IMR-90 (cell line): ENCODE measurements at regions of chr6 and their contacts with region 1.

Region 1: DNA sequence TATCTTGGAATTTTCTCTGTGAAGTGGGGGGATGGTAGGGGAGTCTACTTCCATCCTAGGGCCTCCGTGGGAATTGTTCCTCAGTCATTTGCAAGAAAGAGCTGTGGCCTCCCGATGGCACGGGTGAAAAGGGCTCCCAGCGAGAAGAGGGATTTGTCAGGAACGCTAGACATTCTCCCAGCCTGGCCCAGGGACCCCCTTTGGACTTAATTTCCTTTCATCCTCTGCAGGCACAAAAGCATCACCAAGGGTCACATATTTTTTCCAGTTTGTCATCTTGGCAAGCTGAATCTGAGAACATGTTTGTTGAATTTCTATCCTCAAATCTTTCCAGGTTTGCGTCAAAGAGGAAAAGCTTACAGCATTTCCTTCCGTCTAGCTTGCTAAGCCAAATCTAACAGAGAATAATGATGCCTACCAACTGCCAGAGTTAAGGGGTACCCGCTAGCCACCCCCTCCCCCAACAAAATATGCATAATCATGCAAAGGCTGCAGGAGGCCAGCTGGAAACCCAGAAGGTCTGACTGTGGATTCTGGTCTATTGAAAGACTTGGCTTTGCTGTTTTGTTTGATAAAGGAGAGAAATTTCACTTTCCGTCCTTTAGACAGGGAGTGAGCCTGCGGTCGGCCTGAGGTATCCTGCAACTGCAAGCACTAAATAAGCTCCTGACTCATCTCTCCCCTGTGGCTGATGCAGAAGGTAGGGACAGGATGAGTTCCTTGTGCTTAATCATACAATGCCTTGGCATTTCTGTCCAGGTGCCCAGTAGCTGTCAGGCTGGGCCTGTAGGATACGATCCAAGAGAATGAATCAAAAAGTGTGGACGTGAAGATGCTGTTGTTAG is 23.1 kb downstream of the PSMG4 start:
- DNase-seq: peak; percentile 85
- ATAC-seq: peak; percentile 53
- H3K4me3 ChIP-seq: no peak overlapping the region
- H3K27ac ChIP-seq: peak overlapping the region; percentile 7; the same call in 1 of the 2 replicates
- H3K4me1 ChIP-seq: peaks cover 18% of the 10 kb centered on the region
- H3K27me3 ChIP-seq: no peaks in the 10 kb centered on the region
- CTCF ChIP-seq: no peak
- POLR2A ChIP-seq: no peak
- RAD21 ChIP-seq: no peak

Region 2: DNA sequence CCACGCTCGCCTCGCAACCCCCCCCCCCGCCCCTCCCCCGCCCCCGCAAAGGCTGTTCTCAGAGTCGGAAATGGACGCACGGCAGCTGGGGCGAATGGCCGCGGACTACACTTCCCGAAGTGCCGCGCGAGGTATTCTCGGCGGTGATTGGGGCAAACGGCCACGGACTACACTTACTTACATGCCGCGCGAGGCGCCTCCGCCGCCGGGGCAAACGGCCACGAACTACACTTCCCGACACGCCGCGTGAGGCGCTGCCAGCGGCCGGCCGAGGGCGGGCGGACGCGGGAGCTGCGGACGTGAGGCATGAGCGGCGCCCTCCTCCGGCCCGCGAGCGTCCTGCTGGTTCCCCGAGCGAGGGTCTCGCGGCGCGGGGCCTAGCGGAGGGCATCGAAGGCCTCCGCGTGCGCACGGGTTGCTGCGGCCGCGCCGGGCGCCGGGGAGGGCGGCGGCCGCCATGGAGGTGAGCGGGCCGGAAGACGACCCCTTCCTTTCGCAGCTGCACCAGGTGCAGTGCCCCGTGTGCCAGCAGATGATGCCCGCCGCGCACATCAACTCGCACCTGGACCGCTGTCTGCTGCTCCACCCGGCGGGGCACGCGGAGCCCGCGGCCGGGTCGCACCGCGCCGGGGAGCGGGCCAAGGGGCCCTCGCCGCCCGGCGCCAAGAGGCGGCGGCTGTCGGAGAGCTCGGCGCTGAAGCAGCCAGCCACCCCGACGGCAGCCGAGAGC is 516.5 kb before region 1 on chr6 and contains the start of gene WRNIP1:
- CTCF ChIA-PET with region 1: no interaction called
- POLR2A ChIA-PET with region 1: no interaction called
- dilution Hi-C with region 1: no loop called
- in situ Hi-C with region 1: no loop called
- intact Hi-C with region 1: no loop called
- DNase-seq: peak; percentile 99
- ATAC-seq: peak; percentile 91
- H3K4me3 ChIP-seq: peak within 1 kb of the TSS; percentile 79
- H3K27ac ChIP-seq: peak within 1 kb of the TSS; percentile 86
- H3K4me1 ChIP-seq: peaks cover 18% of the 10 kb centered on the region
- H3K27me3 ChIP-seq: no peaks in the 10 kb centered on the region
- CTCF ChIP-seq: peak; percentile 86
- POLR2A ChIP-seq: peak; percentile 46
- RAD21 ChIP-seq: peak; percentile 24; the same call in 1 of the 2 replicates
- total RNA-seq, gene WRNIP1: 37.2 and 47.1 TPM in 2 replicates

Region 3: GRCh38 chr6:3410385-3411360 is 128.8 kb after region 1 on chr6:
- CTCF ChIA-PET with region 1: no interaction called
- POLR2A ChIA-PET with region 1: no interaction called
- dilution Hi-C with region 1: no loop called
- in situ Hi-C with region 1: no loop called
- intact Hi-C with region 1: loop called (anchors 5 kb)
- DNase-seq: peak; percentile 57
- ATAC-seq: peak; percentile 62
- H3K4me3 ChIP-seq: no peak overlapping the region
- H3K27ac ChIP-seq: no peak overlapping the region
- H3K4me1 ChIP-seq: no peaks in the 10 kb centered on the region
- H3K27me3 ChIP-seq: peaks cover 15% of the 10 kb centered on the region
- CTCF ChIP-seq: peak; percentile 66
- POLR2A ChIP-seq: no peak
- RAD21 ChIP-seq: peak; percentile 72

Region 4: GRCh38 chr6:3522561-3523250 is 240.9 kb after region 1 on chr6:
- CTCF ChIA-PET with region 1: interaction called, 4 read pairs
- POLR2A ChIA-PET with region 1: no interaction called
- dilution Hi-C with region 1: no loop called
- in situ Hi-C with region 1: no loop called
- intact Hi-C with region 1: loop called (anchors 5 kb)
- DNase-seq: peak; percentile 91
- ATAC-seq: peak; percentile 70
- H3K4me3 ChIP-seq: no peak overlapping the region
- H3K27ac ChIP-seq: peak overlapping the region; percentile 93
- H3K4me1 ChIP-seq: peaks cover 27% of the 10 kb centered on the region
- H3K27me3 ChIP-seq: 0 out of 2 replicates have a peak, but pooled peaks cover 2% of the 10 kb centered on the region
- CTCF ChIP-seq: no peak
- POLR2A ChIP-seq: no peak
- RAD21 ChIP-seq: no peak

Region 5: DNA sequence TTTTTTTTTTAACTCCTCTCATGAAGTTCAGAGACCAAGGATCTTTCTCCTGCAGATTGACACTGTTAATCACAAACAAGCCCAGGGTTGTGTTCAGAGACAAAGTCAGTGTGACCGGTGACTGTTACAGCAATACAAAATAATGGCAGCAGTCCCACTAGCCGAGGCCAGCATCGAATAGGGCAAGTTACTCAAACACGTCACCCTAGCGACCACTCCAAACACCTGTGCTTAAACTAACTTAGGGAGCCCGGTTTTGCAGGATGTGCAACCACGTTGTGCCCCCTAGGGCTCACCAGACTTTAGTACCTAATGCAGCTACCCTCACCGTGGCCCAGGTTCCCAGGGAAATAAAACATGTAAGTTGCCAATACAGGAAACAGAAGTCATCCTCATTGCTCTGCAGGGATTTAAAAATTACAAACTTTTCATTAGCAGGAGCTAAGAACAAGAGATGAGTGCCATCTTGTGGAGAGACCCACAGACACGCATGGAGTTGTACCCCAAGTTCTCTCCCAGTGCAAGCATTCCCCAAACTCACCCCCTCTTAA is 605.4 kb after region 1 on chr6:
- CTCF ChIA-PET with region 1: no interaction called
- POLR2A ChIA-PET with region 1: no interaction called
- dilution Hi-C with region 1: no loop called
- in situ Hi-C with region 1: no loop called
- intact Hi-C with region 1: loop called (anchors 1 kb)
- DNase-seq: peak; percentile 54
- ATAC-seq: 0 out of 2 replicates have a peak, but pooled peaks have one; percentile 35
- H3K4me3 ChIP-seq: no peak overlapping the region
- H3K27ac ChIP-seq: no peak overlapping the region
- H3K4me1 ChIP-seq: peaks cover 8% of the 10 kb centered on the region
- H3K27me3 ChIP-seq: 0 out of 2 replicates have a peak, but pooled peaks cover 2% of the 10 kb centered on the region
- CTCF ChIP-seq: peak; percentile 64
- POLR2A ChIP-seq: no peak
- RAD21 ChIP-seq: peak; percentile 74

Region 6: GRCh38 chr6:4008324-4009047 is 726.6 kb after region 1 on chr6:
- CTCF ChIA-PET with region 1: no interaction called
- POLR2A ChIA-PET with region 1: no interaction called
- dilution Hi-C with region 1: no loop called
- in situ Hi-C with region 1: no loop called
- intact Hi-C with region 1: loop called (anchors 1 kb)
- DNase-seq: peak; percentile 92
- ATAC-seq: peak; percentile 87
- H3K4me3 ChIP-seq: no peak overlapping the region
- H3K27ac ChIP-seq: no peak overlapping the region
- H3K4me1 ChIP-seq: no peaks in the 10 kb centered on the region
- H3K27me3 ChIP-seq: no peaks in the 10 kb centered on the region
- CTCF ChIP-seq: peak; percentile 84
- POLR2A ChIP-seq: no peak
- RAD21 ChIP-seq: peak; percentile 84